Caco-2 (cell line): ENCODE measurements at regions of chr2 and their contacts with region 1.

Region 1: DNA sequence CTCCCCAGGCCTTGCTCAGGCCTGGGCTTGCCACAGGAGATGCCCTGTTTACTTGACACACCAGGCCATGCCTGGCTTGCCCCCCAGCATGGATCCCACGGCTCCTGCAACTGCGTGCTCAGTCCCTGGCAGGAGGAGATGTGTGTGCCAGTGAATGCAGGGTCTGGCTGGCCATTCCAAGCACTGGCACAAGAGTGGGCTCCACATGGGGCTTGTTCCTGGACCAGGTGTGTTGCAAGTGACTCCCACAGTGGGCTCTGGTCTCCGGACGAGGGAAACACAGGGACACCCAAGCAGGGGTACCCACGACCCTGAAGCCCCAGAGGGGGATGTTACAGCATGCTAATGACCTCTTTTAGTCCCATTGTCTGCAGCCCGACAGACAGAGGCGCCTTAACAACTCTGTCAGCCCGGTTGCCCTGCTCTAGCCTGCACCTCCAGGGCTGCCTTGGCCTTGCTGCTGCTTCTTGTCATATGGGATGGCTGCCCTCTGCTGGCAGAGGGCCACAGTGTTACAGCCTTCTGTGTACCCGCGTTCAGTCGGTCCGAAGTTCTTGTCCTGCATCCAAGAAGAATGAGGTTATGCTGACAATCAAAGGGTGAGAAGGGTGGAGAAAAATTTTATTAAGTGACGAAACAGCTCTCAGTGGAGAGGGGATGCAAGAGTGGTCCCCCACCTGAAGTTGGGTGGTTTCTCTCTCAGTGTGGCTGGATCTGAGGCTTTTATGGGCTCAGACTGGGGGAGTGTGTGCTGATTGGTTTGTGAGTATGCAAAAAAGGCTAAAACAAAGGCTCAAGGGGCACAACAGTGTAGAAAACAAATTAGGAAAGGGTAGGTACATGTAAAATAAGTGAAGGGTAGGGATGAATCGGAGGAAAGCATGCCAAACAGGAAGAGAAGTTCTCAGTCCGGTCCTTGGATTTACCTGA is 180.4 kb downstream of the MBD5 start:
- DNase-seq: peak; percentile 43 to 57
- H3K4me3 ChIP-seq: no peak overlapping the region
- H3K4me3 Mint-ChIP-seq: no peak overlapping the region
- H3K27ac Mint-ChIP-seq: no peak overlapping the region
- H3K4me1 ChIP-seq: no peaks in the 10 kb centered on the region
- H3K4me1 Mint-ChIP-seq: peaks cover 2% of the 10 kb centered on the region
- H3K27me3 ChIP-seq: no peaks in the 10 kb centered on the region
- H3K27me3 Mint-ChIP-seq: no peaks in the 10 kb centered on the region
- CTCF ChIP-seq: peak; percentile 31

Region 2: DNA sequence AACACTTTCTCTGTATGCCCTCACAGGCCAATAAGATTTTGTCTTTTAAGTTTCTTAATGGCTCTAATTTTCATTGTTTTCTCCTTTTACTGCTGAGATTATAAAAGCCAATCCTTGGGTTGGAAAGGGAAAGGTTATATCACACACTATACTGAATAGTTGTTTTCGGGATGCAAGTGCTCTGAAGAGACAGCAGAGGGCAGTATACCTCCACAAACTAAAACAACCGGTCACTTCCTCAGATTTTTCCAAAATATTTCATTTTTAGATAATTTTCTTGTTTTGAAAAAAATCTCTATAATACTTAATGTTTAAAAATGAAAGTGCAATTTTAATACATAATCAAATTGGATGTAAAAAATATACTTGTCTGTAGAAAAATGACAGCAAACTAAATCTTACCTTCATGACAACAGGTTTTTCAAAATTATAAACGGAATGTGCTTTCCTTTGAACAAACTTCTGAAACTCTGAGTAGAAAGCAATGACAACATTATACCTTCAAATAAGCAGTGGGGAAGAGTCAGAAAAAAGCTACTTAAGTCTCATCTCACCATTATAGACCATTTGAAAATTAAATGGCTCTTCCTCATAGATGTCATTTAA is 263.5 kb before region 1 on chr2:
- CTCF ChIA-PET with region 1: no interaction called
- POLR2A ChIA-PET with region 1: no interaction called
- intact Hi-C with region 1: loop called (anchors 1 kb)
- DNase-seq: peak in 1 of 2 experiments; percentile 20
- H3K4me3 ChIP-seq: no peak overlapping the region
- H3K4me3 Mint-ChIP-seq: no peak overlapping the region
- H3K27ac Mint-ChIP-seq: no peak overlapping the region
- H3K4me1 ChIP-seq: no peaks in the 10 kb centered on the region
- H3K4me1 Mint-ChIP-seq: no peaks in the 10 kb centered on the region
- H3K27me3 ChIP-seq: no peaks in the 10 kb centered on the region
- H3K27me3 Mint-ChIP-seq: no peaks in the 10 kb centered on the region
- CTCF ChIP-seq: peak; percentile 75 to 82

Region 3: GRCh38 chr2:147989809-147990403 is 211.4 kb before region 1 on chr2:
- CTCF ChIA-PET with region 1: no interaction called
- POLR2A ChIA-PET with region 1: no interaction called
- intact Hi-C with region 1: loop called (anchors 1 kb)
- DNase-seq: peak in 1 of 2 experiments; percentile 24
- H3K4me3 ChIP-seq: no peak overlapping the region
- H3K4me3 Mint-ChIP-seq: no peak overlapping the region
- H3K27ac Mint-ChIP-seq: no peak overlapping the region
- H3K4me1 ChIP-seq: 0 out of 2 replicates have a peak, but pooled peaks cover 9% of the 10 kb centered on the region
- H3K4me1 Mint-ChIP-seq: no peaks in the 10 kb centered on the region
- H3K27me3 ChIP-seq: no peaks in the 10 kb centered on the region
- H3K27me3 Mint-ChIP-seq: no peaks in the 10 kb centered on the region
- CTCF ChIP-seq: peak; percentile 46 to 58